Lower lobe of right lung (tissue), 2 donors: ENCODE measurements at regions of chr10 and their contacts with region 1.

Region 1: GRCh38 chr10:4849555-4850242 is 23.7 kb downstream of the AKR1E2 start:
- DNase-seq: peak; percentile 92
- ATAC-seq: peak; percentile 94
- H3K4me3 ChIP-seq: no peak overlapping the region
- H3K27ac ChIP-seq: peak overlapping the region; percentile 44
- H3K4me1 ChIP-seq: peaks cover 25% of the 10 kb centered on the region
- H3K27me3 ChIP-seq: no peaks in the 10 kb centered on the region
- CTCF ChIP-seq: peak; percentile 97

Region 2: DNA sequence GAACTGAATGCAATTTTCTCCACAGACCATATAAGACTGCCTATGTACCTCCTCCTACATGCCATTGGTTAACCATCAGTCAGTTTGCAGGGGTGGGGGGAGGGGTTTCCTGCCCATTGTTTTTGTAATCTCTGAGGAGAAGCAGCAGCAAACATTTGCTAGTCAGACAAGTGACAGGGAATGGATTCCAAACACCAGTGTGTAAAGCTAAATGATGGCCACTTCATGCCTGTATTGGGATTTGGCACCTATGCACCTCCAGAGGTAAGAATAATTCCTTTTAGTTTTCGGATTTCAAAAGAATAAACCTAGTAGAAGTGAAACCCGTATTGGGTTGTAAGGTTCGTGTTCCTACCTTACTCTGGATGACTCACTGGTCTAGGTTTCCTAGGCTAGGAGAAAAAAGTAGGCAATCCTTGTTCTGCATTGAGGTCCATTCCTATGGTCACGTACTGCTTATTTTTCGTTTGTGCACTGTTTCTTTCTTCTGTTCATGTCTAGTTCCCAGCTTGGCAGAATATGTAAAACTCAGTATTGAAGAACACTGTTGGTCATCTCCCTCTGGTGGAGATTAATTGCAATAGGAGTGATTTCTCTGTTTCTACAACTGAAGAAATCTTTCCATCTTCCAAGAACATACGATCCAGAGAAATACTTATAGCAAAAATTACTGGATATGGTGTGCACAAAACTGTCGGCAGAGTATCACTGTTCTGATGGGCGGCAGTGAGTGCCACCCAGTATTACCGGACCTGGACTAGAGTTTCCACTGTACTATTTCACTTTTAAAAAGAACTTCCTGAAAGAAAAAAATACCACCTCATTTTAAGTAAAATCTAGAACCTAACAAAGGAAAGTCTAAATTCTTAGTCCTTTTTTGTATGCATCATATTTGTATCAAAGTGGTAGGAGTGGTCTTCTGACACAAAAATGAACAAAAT is 244.8 kb after region 1 on chr10 and contains the start of gene AKR1C3:
- intact Hi-C with region 1: loop called (anchors 10 kb)
- DNase-seq: no peak
- ATAC-seq: peak; percentile 80 to 84
- H3K4me3 ChIP-seq: peak within 1 kb of the TSS; percentile 69
- H3K27ac ChIP-seq: peak within 1 kb of the TSS; percentile 73
- H3K4me1 ChIP-seq: peaks cover 16% of the 10 kb centered on the region
- H3K27me3 ChIP-seq: no peaks in the 10 kb centered on the region
- CTCF ChIP-seq: peak; percentile 68
- total RNA-seq, gene AKR1C3: 84.4 TPM

Region 3: DNA sequence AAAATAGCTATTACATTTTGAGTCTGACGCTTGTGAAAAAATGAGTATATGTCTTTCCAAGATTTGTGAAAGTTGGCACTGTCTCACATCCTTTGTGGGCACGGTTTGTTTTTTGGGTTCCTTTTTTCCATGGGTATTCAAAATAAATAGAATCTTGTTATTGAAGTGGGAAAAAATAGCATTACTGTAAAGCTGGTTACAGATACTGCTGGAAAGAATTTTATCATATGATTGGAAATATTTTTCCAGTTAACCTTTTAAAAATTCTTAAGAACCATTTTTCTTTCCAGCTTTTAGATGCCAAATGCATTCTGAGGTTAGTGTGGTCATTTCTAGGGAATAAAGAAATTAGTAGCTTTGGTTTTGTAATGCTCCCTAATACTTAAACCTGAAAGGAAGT is 574.1 kb after region 1 on chr10:
- intact Hi-C with region 1: loop called (anchors 10 kb)
- DNase-seq: no peak
- ATAC-seq: no peak
- H3K4me3 ChIP-seq: no peak overlapping the region
- H3K27ac ChIP-seq: no peak overlapping the region
- H3K4me1 ChIP-seq: peaks cover 17% of the 10 kb centered on the region
- H3K27me3 ChIP-seq: no peaks in the 10 kb centered on the region
- CTCF ChIP-seq: no peak